Gastrocnemius medialis (tissue), 4 donors: ENCODE measurements at regions of chr10 and their contacts with region 1.

Region 1: DNA sequence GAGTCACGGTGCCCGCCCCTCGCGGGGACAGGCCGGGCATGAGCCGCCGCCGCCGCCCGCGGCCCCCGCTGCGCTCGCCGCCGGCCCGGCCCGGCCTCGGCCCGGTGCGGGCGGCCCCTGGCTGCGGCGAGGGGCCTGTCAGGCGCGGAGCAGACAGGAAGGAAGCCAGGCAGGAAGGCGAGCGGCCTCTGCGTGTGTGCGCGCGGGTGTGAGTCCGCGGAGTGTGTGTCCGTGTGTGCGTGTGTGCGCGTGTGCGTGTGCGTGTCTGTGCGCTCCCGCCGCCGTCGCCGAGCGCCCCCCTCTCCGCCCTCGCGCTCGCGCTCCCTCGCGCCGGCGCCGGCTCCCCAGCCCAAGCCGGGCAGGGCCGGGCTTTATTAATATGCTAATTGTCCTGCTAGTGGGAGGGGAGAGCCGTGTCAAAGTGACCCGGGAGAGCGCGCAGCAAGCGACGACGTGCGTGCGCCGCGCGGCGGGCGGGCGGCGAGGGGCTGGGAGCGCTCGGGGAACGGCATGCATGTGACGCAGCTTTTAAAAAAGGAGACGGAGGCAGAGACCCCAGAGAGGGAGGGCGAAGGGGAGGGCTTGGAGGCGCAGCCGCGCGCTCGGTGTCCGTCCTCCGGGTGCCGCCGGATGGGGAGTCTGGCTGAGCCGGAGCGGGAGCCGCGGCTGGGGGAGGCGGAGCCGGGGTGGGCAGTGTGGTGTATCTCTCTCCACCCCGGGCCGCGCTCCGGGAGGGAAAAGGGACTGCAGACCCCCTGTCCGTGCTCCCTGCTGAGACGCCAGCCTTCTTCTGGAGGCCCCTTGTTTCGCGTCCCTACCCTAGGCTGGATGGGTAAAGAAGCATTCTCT is at the start of gene LDB1:
- DNase-seq: peak; percentile 76 to 80
- ATAC-seq: peak; percentile 78 to 79
- H3K4me3 ChIP-seq: peak within 1 kb of the TSS; percentile 79 to 95 (median 84)
- H3K27ac ChIP-seq: peak within 1 kb of the TSS; percentile 92 to 100 (median 98)
- H3K4me1 ChIP-seq: peaks cover 50 to 52% of the 10 kb centered on the region in 2 donors
- H3K27me3 ChIP-seq: no peaks in the 10 kb centered on the region
- CTCF ChIP-seq: peak in 3 of 5 experiments; percentile 15 to 29 (median 19)
- POLR2A ChIP-seq: peak; percentile 97 to 98
- total RNA-seq, gene LDB1: 15.9 to 32.7 (median 28.6) TPM

Region 2: GRCh38 chr10:102151774-102152544 is 31.6 kb after region 1 on chr10 and contains the start of gene NOLC1:
- in situ Hi-C with region 1: no loop called
- intact Hi-C with region 1: loop called (anchors 1 kb)
- DNase-seq: peak; percentile 96 to 99
- ATAC-seq: peak; percentile 98 to 99
- H3K4me3 ChIP-seq: peak within 1 kb of the TSS; percentile 75 to 99 (median 92)
- H3K27ac ChIP-seq: peak within 1 kb of the TSS; percentile 82 to 97 (median 94)
- H3K4me1 ChIP-seq: peaks cover 12 to 16% of the 10 kb centered on the region in 2 donors
- H3K27me3 ChIP-seq: no peaks in the 10 kb centered on the region
- CTCF ChIP-seq: peak in 1 of 5 experiments; percentile 24
- POLR2A ChIP-seq: peak; percentile 84 to 90
- total RNA-seq, gene NOLC1: 37.2 to 76.7 (median 71.1) TPM